ENCODE measurements at regions of chr6 and their contacts with region 1.

Region 1: DNA sequence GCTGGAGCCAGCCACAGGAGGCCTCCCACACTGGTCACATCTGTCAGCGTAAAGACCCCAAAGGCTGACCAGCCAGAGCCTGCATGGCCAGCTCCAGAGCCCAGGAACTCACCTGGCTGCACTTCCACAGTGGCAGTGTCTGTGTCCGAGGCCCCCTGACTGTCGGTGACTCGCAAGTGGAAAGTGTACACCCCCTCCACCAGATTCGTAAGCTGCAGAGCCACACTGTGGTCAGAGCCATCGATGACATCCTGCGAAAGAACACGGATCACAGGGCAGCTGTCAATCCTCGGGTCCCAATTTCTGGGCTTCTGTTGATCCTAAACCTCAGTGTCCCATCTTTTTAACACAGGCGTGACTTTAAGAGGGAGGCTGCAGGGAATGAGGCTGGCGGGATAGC is 69.3 kb downstream of the ALDH5A1 start:
- DNase-seq: peak in 1 of 2 experiments; percentile 32
- H3K4me3 ChIP-seq: no peak overlapping the region
- H3K4me3 Mint-ChIP-seq: no peak overlapping the region
- H3K27ac Mint-ChIP-seq: no peak overlapping the region
- H3K4me1 ChIP-seq: no peaks in the 10 kb centered on the region
- H3K4me1 Mint-ChIP-seq: no peaks in the 10 kb centered on the region
- H3K27me3 ChIP-seq: no peaks in the 10 kb centered on the region
- H3K27me3 Mint-ChIP-seq: peaks cover 7% of the 10 kb centered on the region
- CTCF ChIP-seq: no peak

Region 2: DNA sequence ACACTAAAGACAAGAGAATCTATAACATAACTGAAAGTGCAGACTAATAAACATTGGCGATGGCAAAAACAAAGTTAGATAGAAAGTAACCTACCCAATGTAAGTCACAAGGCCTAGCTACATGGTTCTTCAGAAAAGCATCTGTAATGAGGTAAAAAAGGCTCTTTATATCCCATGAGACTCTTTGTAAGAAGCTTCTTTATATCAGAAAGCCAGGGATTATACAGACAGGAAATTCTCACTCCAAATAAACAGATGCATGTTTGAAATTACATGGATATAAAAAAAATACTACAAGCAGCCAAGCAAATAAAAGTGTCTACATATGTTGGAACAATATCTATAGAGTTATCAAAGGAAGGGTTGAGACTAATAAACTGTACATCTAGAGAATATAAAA is 723.0 kb before region 1 on chr6:
- CTCF ChIA-PET with region 1: no interaction called
- POLR2A ChIA-PET with region 1: no interaction called
- intact Hi-C with region 1: no loop called
- DNase-seq: no peak
- H3K4me3 ChIP-seq: no peak overlapping the region
- H3K4me3 Mint-ChIP-seq: no peak overlapping the region
- H3K27ac Mint-ChIP-seq: no peak overlapping the region
- H3K4me1 ChIP-seq: no peaks in the 10 kb centered on the region
- H3K4me1 Mint-ChIP-seq: no peaks in the 10 kb centered on the region
- H3K27me3 ChIP-seq: no peaks in the 10 kb centered on the region
- H3K27me3 Mint-ChIP-seq: no peaks in the 10 kb centered on the region
- CTCF ChIP-seq: no peak

Region 3: DNA sequence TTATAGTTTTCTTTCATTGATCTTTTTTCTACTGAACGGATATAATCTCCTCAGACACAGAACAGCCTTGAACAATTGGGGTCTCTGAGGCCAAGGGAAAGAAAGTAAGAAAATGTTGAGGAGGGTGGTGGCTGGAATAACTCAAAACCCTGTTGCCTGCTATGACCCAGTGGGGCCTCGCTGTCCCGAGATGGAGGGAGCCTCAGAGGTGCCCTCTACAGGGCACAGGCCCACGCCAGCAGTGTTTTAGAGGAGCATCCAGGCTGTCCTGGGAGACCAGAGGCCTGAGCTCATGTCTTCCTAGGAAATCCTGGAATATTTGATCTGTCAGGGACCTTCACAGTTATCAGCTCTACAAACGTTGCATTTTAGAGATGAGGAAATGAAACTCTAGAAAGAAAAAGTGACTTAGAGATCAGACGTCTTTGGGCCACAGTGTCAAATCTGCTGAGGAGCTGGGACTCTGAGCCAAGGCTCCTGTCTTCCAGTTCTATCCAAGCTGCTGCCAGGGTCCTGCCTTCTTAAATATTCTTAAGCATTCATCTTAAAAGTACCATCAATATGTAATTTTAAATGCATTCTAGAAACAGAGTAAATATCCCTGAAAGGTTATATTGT is 43.1 kb before region 1 on chr6:
- CTCF ChIA-PET with region 1: no interaction called
- POLR2A ChIA-PET with region 1: no interaction called
- intact Hi-C with region 1: loop called (anchors 1 kb)
- DNase-seq: peak; percentile 70 to 79
- H3K4me3 ChIP-seq: no peak overlapping the region
- H3K4me3 Mint-ChIP-seq: no peak overlapping the region
- H3K27ac Mint-ChIP-seq: no peak overlapping the region
- H3K4me1 ChIP-seq: no peaks in the 10 kb centered on the region
- H3K4me1 Mint-ChIP-seq: peaks cover 12% of the 10 kb centered on the region
- H3K27me3 ChIP-seq: no peaks in the 10 kb centered on the region
- H3K27me3 Mint-ChIP-seq: no peaks in the 10 kb centered on the region
- CTCF ChIP-seq: peak; percentile 76 to 93

Region 4: GRCh38 chr6:24574809-24575208 is 10.7 kb after region 1 on chr6:
- CTCF ChIA-PET with region 1: no interaction called
- POLR2A ChIA-PET with region 1: no interaction called
- intact Hi-C with region 1: no loop called
- DNase-seq: no peak
- H3K4me3 ChIP-seq: no peak overlapping the region
- H3K4me3 Mint-ChIP-seq: no peak overlapping the region
- H3K27ac Mint-ChIP-seq: no peak overlapping the region
- H3K4me1 ChIP-seq: no peaks in the 10 kb centered on the region
- H3K4me1 Mint-ChIP-seq: no peaks in the 10 kb centered on the region
- H3K27me3 ChIP-seq: no peaks in the 10 kb centered on the region
- H3K27me3 Mint-ChIP-seq: peaks cover 6% of the 10 kb centered on the region
- CTCF ChIP-seq: no peak

Region 5: GRCh38 chr6:24630856-24631505 is 66.9 kb after region 1 on chr6:
- CTCF ChIA-PET with region 1: no interaction called
- POLR2A ChIA-PET with region 1: no interaction called
- intact Hi-C with region 1: no loop called
- DNase-seq: no peak
- H3K4me3 ChIP-seq: no peak overlapping the region
- H3K4me3 Mint-ChIP-seq: no peak overlapping the region
- H3K27ac Mint-ChIP-seq: no peak overlapping the region
- H3K4me1 ChIP-seq: no peaks in the 10 kb centered on the region
- H3K4me1 Mint-ChIP-seq: peaks cover 6% of the 10 kb centered on the region
- H3K27me3 ChIP-seq: no peaks in the 10 kb centered on the region
- H3K27me3 Mint-ChIP-seq: no peaks in the 10 kb centered on the region
- CTCF ChIP-seq: no peak